GM12878 (cell line): ENCODE measurements at regions of chr6 and their contacts with region 1.

Region 1: DNA sequence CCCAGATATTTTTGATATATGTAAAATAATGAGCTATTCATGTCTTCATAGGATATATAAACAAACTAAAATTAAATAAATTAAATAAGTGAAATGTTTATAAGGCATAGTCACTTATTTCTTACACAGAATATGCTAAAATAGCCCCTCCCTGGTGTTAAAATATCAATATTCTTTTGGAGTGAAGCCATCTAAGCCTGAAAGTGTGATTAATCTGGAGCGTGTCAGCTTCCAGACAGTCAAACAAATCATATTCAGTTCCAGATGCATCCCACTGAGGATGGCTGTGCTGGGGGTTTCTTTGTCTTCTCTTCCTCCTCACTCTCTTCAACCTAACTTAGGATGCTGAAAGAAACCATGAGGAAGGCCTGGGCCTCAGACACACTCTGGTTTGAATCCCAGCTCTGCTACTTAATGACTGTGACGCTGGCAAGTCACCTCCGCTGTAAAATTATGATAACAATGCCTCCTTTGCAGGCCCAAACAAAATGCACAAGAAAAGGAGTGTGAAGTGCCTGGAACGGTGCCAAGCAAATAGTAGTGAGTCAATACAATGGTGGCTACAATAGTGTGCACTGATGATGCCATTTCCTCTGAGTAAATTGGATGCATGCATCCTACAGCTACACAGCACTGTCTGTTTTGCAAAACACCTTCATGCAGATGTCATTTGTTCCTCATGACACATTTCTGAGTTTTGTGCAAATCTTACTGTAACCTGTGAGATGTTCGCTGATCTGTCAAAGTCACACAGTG is 161.4 kb downstream of the FOXC1 start:
- DNase-seq: no peak
- ATAC-seq: peak; percentile 18; the same call in 1 of the 3 replicates
- H3K4me3 ChIP-seq: no peak overlapping the region
- H3K27ac ChIP-seq: no peak overlapping the region
- H3K4me1 ChIP-seq: peaks cover 14% of the 10 kb centered on the region; the same call in 1 of the 2 replicates
- H3K27me3 ChIP-seq: no peaks in the 10 kb centered on the region
- CTCF ChIP-seq: no peak
- EP300 ChIP-seq: no peak
- POLR2A ChIP-seq: no peak
- RAD21 ChIP-seq: no peak

Region 2: DNA sequence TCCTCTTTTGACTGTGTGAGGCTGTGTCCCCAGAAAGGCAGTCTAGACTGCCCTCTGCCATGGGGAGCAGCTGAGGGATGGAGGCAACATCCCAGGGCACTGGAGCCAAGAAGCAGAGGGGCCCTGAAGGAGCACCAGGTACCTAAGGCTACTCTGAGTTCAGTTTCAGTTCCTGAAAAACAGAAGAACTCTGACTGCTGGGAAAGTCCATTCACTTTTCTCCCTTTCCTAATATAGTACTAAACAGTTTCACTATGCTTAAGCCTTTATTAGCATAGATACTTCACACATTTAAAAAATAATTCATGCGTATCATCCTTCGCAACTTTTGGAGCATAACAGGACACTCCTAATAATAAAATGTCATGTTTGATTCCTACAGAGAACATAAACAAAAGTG is 31.5 kb before region 1 on chr6:
- CTCF ChIA-PET with region 1: interaction called, 3 read pairs
- POLR2A ChIA-PET with region 1: no interaction called
- RAD21 ChIA-PET with region 1: no interaction called
- SMC1A ChIA-PET with region 1: interaction called, 6 read pairs
- in situ Hi-C with region 1: no loop called
- intact Hi-C with region 1: loop called (anchors 1 kb)
- DNase-seq: peak; percentile 92
- ATAC-seq: peak; percentile 95
- H3K4me3 ChIP-seq: peak overlapping the region; percentile 18; the same call in 1 of the 2 replicates
- H3K27ac ChIP-seq: peak overlapping the region; percentile 63
- H3K4me1 ChIP-seq: peaks cover 31% of the 10 kb centered on the region
- H3K27me3 ChIP-seq: no peaks in the 10 kb centered on the region
- CTCF ChIP-seq: no peak
- EP300 ChIP-seq: peak; percentile 94 to 98
- POLR2A ChIP-seq: no peak
- RAD21 ChIP-seq: 0 out of 2 replicates have a peak, but pooled peaks have one; percentile 1